ENCODE measurements at regions of chr2 and their contacts with region 1.

Region 1: DNA sequence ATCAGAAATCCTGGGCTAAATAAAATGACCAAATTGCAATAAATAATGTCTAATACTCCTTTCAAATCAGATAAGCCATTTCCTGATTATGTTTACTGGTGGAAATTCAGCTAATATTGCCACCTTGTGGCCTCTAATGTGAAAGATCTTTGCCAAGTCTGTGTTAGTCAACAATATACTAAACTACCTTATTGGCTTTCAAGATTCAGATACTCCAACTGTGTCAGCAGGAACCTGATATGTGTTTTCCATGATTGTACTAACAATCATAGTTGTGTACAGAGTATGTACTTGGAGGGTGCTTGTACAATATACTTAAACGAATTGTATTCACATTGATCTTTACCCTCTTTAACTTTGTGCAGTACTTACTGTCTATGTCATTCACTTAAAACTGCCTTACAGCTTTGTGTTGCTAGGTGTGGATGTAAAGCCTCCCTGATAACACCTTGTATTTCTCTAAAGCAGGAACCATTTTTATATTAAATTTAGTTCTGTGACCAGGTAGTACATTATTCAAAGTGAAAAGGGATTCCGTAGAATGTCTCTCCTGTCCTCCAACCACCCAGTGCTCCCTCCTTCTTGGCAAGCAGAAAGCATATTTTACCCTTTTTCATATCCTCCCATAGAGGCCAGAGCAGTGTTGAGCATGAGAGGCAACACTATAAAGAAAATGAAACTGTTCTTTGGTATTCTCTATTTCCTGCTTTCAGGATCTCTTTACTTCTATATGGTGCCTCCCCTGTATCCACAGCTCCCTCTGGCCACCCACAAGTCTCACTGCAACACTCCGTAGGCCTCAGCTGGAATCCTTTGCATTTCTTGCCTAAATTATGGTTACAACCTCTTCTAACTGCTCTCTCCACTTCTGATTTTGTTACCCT is 75.2 kb upstream of the C2orf15 start:
- DNase-seq: peak; percentile 48
- CTCF ChIP-seq: peak; percentile 60

Region 2: DNA sequence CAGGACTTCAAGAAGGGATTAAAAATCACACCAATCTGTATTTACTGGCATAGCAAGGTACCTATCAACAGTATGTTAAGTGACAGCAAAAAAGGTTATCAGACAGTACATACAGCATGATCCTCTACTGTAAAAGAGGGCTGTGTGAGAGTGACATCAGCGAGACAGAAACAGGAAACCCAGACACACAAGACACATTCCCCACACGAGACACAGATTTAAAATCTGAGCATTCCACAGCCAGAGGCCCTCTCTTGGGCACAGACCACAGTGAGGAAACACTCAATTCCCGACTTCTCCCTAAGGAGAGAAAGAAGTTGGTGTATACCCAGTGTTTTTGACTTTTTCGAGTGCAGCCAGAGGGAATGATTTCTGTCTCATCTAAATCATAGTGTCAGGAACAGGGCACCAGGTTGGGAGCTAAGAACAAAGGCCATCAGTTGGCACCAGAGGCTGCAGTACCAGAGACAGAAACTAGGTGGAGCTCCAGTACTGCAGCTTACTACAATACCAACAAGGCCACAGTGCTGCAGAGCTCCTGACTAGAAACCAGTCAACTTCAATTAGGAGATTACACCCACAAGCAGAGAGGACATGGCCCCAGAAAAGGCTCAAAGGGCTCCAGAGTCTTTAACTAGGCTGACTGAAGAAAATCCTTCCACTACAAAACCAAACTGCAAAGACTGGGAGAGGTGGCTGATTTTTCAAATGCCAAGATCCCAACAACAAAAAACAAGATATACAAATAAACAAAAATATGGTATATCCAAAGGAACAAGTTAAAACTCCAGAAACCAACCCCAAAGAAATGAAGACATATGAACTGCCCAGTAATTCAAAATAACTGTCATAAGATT is 417.0 kb before region 1 on chr2:
- in situ Hi-C with region 1: loop called (anchors 25 kb)
- DNase-seq: peak; percentile 53
- CTCF ChIP-seq: peak; percentile 94

Region 3: DNA sequence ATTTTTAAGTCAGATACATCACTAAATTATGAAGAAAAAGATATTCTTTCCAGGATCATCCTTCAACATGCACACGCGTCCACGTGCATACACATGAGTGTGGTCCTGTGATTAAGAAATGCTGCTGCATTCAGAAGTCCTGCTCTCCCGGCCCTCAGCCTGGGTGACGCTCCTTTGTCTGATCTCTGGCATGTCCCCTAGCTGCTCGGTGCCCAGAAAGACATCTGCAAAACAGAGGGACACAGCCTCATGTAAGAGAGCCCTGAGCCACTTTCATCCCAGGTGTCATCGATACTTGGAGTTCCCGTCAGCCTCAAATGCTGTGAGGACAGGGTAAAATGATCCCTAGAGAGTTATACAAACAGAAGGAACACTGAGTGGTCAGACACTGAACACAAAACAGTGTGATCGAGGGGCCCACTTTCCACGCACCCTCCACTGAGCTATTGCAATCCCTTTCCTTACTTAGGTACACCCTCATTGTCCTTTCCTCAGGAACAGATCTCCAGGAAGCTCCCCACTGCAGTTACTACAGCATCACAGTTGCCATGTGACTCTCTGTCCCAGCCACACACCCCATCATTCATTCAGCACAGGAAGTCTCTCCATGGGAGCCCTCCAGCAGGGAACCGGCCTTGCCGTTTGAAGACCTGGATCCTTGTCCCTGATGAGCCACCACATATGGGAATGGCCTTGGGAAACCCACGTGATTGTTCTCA is 162.4 kb before region 1 on chr2:
- in situ Hi-C with region 1: no loop called
- DNase-seq: no peak
- CTCF ChIP-seq: no peak